ENCODE measurements at regions of chr22 and their contacts with region 1.

Region 1: GRCh38 chr22:30423982-30424963 is 1.3 kb upstream of the MTFP1 start:
- DNase-seq: peak; percentile 99
- H3K4me3 Mint-ChIP-seq: peak overlapping the region; percentile 99
- H3K27ac Mint-ChIP-seq: peak overlapping the region; percentile 99
- H3K4me1 Mint-ChIP-seq: peaks cover 61% of the 10 kb centered on the region
- H3K27me3 Mint-ChIP-seq: no peaks in the 10 kb centered on the region

Region 2: DNA sequence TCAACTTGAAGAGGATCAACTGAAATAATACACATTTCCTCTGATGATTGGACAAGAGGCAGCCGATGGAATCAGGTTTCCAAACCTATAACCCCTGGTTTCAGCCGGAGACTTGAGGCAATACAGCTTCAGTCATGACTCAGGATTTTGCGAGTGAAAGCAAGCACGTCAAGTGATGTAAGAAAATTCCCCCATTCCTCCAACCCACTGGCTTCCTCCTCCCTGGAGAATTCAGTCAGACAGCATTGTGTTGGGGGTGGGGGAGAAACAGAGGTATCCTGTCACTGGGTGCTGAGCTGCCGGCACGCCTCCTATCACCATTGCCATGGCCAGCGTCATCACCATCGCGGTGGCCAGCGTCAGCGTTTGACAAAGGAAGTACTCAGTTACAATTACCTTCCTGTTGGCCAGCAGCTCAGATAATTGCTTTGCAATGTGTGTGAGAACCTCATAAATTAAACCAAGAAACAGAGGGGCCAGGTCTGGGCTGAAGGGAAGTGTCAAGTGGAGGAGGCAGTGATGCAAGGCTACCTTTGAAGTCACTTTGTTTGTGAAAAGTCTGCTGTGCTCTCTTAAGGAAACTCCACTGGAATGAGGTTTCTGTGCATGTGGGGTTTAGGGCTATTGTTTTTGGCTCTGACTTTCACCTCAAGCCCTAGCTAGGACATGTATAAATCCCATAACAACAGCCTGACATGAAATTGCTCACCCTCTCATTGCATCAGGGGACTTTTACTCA is 228.0 kb before region 1 on chr22:
- intact Hi-C with region 1: loop called (anchors 10 kb)
- DNase-seq: peak; percentile 83
- H3K4me3 Mint-ChIP-seq: peak overlapping the region; percentile 73
- H3K27ac Mint-ChIP-seq: peak overlapping the region; percentile 96
- H3K4me1 Mint-ChIP-seq: peaks cover 70% of the 10 kb centered on the region
- H3K27me3 Mint-ChIP-seq: no peaks in the 10 kb centered on the region

Region 3: DNA sequence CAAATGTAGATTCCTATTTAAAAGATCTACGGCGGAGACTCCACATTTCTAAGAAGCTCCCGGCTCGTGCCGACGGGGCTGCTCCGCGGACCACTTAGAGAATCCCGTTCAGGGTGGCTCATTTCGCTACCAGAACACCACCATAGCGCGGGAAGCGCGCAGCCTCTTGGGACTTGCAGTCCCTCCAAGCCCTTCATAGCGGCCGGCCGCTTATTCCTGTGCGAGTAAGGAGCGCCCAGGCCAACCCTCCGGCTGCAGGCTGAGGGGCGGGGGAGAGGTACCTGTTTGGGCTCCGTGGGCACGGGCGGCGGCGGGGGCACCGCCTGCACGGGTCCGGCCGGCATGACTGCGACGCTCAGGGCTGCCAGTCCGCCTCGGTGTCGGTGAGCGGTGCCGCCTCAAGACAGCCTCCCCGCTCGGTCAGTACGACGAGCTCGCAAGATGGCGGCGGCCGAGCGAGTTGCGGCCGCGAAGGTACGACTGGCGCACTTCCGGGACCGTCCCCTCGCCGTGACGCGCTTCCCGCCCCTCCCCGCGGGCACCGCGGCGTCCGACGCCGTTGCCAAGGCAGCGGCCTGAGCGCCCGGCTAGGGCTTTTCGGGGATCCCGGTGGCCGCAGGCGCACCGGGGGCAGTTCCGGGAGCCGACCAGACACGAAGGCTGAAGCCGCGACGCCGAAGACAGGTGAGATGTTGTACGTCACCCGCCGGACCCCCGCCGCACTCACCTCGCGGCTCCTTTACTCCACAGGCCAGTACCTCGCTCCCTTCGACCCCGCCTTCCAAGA is 67.6 kb before region 1 on chr22 and contains the starts of genes CCDC157 and SF3A1:
- intact Hi-C with region 1: loop called (anchors 1 kb)
- DNase-seq: peak; percentile 98
- H3K4me3 Mint-ChIP-seq: peak within 1 kb of the TSS; percentile 95
- H3K27ac Mint-ChIP-seq: peak within 1 kb of the TSS; percentile 92
- H3K4me1 Mint-ChIP-seq: peaks cover 31% of the 10 kb centered on the region
- H3K27me3 Mint-ChIP-seq: peaks cover 2% of the 10 kb centered on the region
- total RNA-seq, gene CCDC157: 2.9 and 3.2 TPM in 2 replicates
- total RNA-seq, gene SF3A1: 314 and 319 TPM in 2 replicates

Region 4: GRCh38 chr22:30413745-30414524 is 10.3 kb before region 1 on chr22:
- intact Hi-C with region 1: loop called (anchors 1 kb)
- DNase-seq: no peak
- H3K4me3 Mint-ChIP-seq: peak overlapping the region; percentile 29
- H3K27ac Mint-ChIP-seq: peak overlapping the region; percentile 77
- H3K4me1 Mint-ChIP-seq: peaks cover 36% of the 10 kb centered on the region
- H3K27me3 Mint-ChIP-seq: no peaks in the 10 kb centered on the region

Region 5: GRCh38 chr22:30485362-30485988 is 61.2 kb after region 1 on chr22:
- intact Hi-C with region 1: loop called (anchors 2 kb)
- DNase-seq: peak; percentile 94
- H3K4me3 Mint-ChIP-seq: no peak overlapping the region
- H3K27ac Mint-ChIP-seq: no peak overlapping the region
- H3K4me1 Mint-ChIP-seq: no peaks in the 10 kb centered on the region
- H3K27me3 Mint-ChIP-seq: peaks cover 3% of the 10 kb centered on the region

Region 6: GRCh38 chr22:31496007-31496734 is 1071.9 kb after region 1 on chr22 and contains the start of gene SFI1:
- intact Hi-C with region 1: loop called (anchors 10 kb)
- DNase-seq: peak; percentile 99
- H3K4me3 Mint-ChIP-seq: peak within 1 kb of the TSS; percentile 90
- H3K27ac Mint-ChIP-seq: peak within 1 kb of the TSS; percentile 93
- H3K4me1 Mint-ChIP-seq: peaks cover 36% of the 10 kb centered on the region
- H3K27me3 Mint-ChIP-seq: no peaks in the 10 kb centered on the region
- total RNA-seq, gene SFI1: 321 and 352 TPM in 2 replicates

Measured in activated CD4-positive, alpha-beta T cell treated with anti-CD3 and anti-CD28 coated beads, Interleukin-2, amount 10 ng/mL, durations not matched to agents 24 days and 14 days (primary cell).